ENCODE measurements at regions of chr5 and their contacts with region 1.

Region 1: DNA sequence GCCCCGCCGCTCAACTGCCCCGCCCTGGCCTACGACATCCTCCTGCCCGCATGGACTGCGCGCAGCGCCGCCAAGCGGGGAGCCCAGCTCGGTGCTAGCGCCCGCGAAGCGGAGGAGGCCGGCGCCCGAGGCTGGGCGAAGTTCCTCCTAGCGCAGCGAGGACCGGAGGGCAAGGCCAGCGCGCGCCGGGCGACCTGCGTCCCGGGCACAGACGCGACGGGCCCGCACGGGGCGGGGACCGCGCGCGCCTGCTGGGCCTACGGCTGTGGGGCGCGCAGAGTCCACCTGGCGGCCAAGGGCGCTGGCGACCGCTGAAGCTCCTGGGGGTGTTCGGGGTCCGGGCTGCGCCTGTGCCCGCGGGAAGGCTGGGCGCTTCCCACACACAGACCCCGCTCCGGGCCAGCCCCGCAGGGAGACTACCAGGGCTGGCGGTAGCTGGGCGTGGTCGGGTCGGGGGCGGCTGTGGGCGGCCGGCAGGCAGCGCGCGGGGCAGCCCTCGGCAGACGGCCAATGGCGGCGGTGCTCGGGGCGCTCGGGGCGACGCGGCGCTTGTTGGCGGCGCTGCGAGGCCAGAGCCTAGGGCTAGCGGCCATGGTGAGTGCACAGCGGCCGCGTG is at the start of gene PCBD2:
- DNase-seq: peak; percentile 83 to 94 (median 90)
- ATAC-seq: peak; percentile 79 to 88
- H3K4me3 Mint-ChIP-seq: peak within 1 kb of the TSS; percentile 92 to 97 (median 95)
- H3K27ac Mint-ChIP-seq: peak within 1 kb of the TSS; percentile 97 to 99 (median 99)
- H3K4me1 Mint-ChIP-seq: peaks cover 0 to 27% (median 6%) of the 10 kb centered on the region in 4 donors
- H3K27me3 Mint-ChIP-seq: no peaks in the 10 kb centered on the region
- polyA plus RNA-seq, gene PCBD2: 10.6 to 12.4 (median 12.3) TPM

Region 2: GRCh38 chr5:134637161-134637582 is 267.6 kb before region 1 on chr5:
- POLR2A ChIA-PET with region 1: interaction called, 10 read pairs
- DNase-seq: no peak
- ATAC-seq: no peak
- H3K4me3 Mint-ChIP-seq: no peak overlapping the region
- H3K27ac Mint-ChIP-seq: no peak overlapping the region
- H3K4me1 Mint-ChIP-seq: peaks cover 0 to 7% (median 4%) of the 10 kb centered on the region in 4 donors
- H3K27me3 Mint-ChIP-seq: no peaks in the 10 kb centered on the region

Region 3: GRCh38 chr5:134738133-134738962 is 166.4 kb before region 1 on chr5 and contains the start of gene CAMLG:
- POLR2A ChIA-PET with region 1: interaction called, 38 read pairs
- DNase-seq: peak; percentile 91 to 98 (median 96)
- ATAC-seq: peak; percentile 96
- H3K4me3 Mint-ChIP-seq: peak within 1 kb of the TSS; percentile 86 to 100 (median 95)
- H3K27ac Mint-ChIP-seq: peak within 1 kb of the TSS; percentile 67 to 99 (median 94)
- H3K4me1 Mint-ChIP-seq: peaks cover 7 to 45% (median 36%) of the 10 kb centered on the region in 4 donors
- H3K27me3 Mint-ChIP-seq: no peaks in the 10 kb centered on the region
- polyA plus RNA-seq, gene CAMLG: 38.1 to 39.3 (median 38.8) TPM

Region 4: DNA sequence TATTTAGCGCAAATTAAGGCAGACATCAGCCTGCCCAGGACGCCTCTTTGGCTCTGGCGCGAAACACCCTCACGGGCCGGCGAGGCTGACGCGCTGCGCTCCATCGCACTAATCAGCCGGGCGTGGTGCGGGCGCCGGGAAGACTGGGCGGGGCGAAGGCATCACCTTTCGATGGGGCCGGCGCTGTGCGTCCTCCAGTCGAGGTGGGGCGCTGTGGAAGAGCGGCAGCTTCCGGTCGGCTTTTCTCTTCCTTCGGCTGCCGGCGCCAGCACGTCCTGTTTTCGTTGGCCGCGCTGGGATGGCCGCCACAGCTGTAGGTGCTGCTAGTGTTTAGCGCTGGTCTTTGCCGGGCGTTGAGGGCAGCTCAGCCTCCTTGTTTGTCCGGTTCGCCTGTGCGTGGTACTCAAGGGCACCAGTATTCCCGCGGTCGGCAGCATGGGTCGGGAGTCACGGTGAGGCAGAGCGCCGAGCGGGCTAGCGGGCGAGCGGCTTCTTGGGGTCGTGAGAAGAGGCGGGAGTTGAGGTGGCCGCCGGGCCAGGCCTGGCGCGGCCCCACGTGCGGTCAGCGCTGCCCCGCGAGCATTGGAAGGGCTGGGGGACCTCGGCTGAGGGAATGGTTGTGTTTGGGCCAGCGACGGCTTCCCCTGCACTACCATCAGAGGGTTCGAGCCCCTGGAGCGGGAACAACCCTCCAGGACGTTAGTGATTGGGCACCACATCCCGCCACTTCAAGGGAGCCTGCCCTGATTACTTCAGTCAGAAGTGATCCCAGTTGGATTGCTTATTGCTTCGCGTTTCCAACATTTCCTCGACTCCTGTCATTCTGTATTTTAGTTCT is 146.0 kb before region 1 on chr5 and contains the start of gene DDX46:
- POLR2A ChIA-PET with region 1: interaction called, 31 read pairs
- DNase-seq: peak; percentile 88 to 95 (median 90)
- ATAC-seq: peak; percentile 97 to 98
- H3K4me3 Mint-ChIP-seq: peak within 1 kb of the TSS; percentile 99 to 100 (median 100)
- H3K27ac Mint-ChIP-seq: peak within 1 kb of the TSS; percentile 95 to 99 (median 98)
- H3K4me1 Mint-ChIP-seq: peaks cover 20 to 44% (median 41%) of the 10 kb centered on the region in 4 donors
- H3K27me3 Mint-ChIP-seq: no peaks in the 10 kb centered on the region
- polyA plus RNA-seq, gene DDX46: 17.9 to 23.4 (median 21.4) TPM

Region 5: GRCh38 chr5:134845852-134846640 is 58.7 kb before region 1 on chr5 and contains the start of gene C5orf24:
- POLR2A ChIA-PET with region 1: interaction called, 37 read pairs
- DNase-seq: peak; percentile 82 to 95 (median 89)
- ATAC-seq: peak; percentile 90
- H3K4me3 Mint-ChIP-seq: peak within 1 kb of the TSS; percentile 86 to 95 (median 90)
- H3K27ac Mint-ChIP-seq: peak within 1 kb of the TSS; percentile 90 to 97 (median 96)
- H3K4me1 Mint-ChIP-seq: peaks cover 13 to 42% (median 34%) of the 10 kb centered on the region in 4 donors
- H3K27me3 Mint-ChIP-seq: no peaks in the 10 kb centered on the region
- polyA plus RNA-seq, gene C5orf24: 6.6 to 9.4 (median 9.2) TPM

Region 6: GRCh38 chr5:134873987-134874830 is 30.5 kb before region 1 on chr5 and contains the start of gene TXNDC15:
- POLR2A ChIA-PET with region 1: interaction called, 48 read pairs
- DNase-seq: peak; percentile 66 to 87 (median 78)
- ATAC-seq: peak; percentile 95
- H3K4me3 Mint-ChIP-seq: peak within 1 kb of the TSS; percentile 89 to 97 (median 94)
- H3K27ac Mint-ChIP-seq: peak within 1 kb of the TSS; percentile 92 to 97 (median 96)
- H3K4me1 Mint-ChIP-seq: peaks cover 24 to 48% (median 40%) of the 10 kb centered on the region in 4 donors
- H3K27me3 Mint-ChIP-seq: no peaks in the 10 kb centered on the region
- polyA plus RNA-seq, gene TXNDC15: 8.7 to 12.2 (median 9.1) TPM

Measured in naive thymus-derived CD8-positive, alpha-beta T cell (primary cell).